Ovary (tissue), 10 donors: ENCODE measurements at regions of chr14 and their contacts with region 1.

Region 1: DNA sequence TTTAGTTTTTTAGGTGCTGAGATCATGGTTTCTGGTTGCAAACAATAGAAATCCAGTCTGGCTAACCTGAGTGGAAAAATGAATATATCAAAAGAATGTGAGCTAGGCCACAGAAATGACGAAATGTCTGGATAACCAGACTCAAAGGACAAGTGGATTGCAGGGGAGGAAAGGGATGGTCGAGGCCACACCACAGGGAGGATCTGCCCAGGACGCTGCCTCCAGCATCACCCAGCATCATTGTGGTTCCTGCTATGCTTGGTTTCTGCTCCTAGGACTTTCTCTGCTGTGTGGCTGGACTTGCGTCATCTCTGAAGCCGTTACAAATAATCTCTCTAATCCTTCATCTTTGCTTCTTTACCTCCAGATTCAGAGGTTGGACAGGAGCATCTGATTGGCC is 80.4 kb downstream of the TTC8 start:
- DNase-seq: no peak
- H3K4me3 ChIP-seq: no peak overlapping the region
- H3K27ac ChIP-seq: no peak overlapping the region
- H3K4me1 ChIP-seq: no peaks in the 10 kb centered on the region
- H3K27me3 ChIP-seq: no peaks in the 10 kb centered on the region
- CTCF ChIP-seq: no peak
- EP300 ChIP-seq: no peak
- POLR2A ChIP-seq: no peak

Region 2: GRCh38 chr14:88856786-88857366 is 48.0 kb before region 1 on chr14:
- intact Hi-C with region 1: no loop called
- DNase-seq: no peak
- H3K4me3 ChIP-seq: no peak overlapping the region
- H3K27ac ChIP-seq: peak overlapping the region in 1 of 2 donors; percentile 61
- H3K4me1 ChIP-seq: peaks cover 3% of the 10 kb centered on the region
- H3K27me3 ChIP-seq: no peaks in the 10 kb centered on the region
- CTCF ChIP-seq: no peak
- EP300 ChIP-seq: no peak
- POLR2A ChIP-seq: no peak

Region 3: DNA sequence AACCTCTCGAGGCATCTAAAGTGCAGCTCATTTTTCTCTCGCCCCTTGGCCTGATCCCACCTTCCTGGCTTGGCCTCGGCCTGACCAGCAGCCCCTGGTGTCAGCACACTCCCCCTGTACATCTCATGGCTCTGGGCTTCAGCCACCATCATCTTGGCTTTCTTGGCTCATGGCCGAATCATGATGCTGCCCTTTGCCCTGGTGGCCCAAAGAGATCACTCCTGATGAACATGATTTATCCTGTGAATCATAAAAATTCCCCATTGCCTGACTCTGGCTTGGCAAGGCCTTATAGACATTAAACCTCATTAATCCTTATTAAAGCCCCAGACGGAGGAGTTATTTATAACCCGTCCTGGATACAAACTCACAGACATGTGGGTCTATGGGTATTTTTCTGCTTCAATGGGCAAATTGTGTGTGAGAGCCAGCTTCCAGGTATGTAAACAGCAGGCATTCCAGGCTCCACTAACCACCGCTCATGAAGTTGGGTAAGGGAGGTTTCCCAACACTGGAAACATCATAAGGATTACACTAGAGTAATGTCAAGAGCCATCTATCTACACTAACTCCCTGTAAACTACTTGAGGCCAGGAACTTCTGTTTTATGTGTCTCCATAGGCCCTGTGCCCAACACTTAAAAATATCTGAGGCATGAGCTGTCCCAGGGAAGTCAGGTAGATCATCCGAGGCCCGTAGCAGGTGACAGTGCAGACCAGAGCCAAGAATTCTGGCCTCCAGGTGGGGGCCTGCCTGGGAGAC is 90.8 kb after region 1 on chr14:
- intact Hi-C with region 1: no loop called
- DNase-seq: no peak
- H3K4me3 ChIP-seq: no peak overlapping the region
- H3K27ac ChIP-seq: no peak overlapping the region
- H3K4me1 ChIP-seq: no peaks in the 10 kb centered on the region
- H3K27me3 ChIP-seq: no peaks in the 10 kb centered on the region
- CTCF ChIP-seq: no peak
- EP300 ChIP-seq: no peak
- POLR2A ChIP-seq: no peak

Region 4: DNA sequence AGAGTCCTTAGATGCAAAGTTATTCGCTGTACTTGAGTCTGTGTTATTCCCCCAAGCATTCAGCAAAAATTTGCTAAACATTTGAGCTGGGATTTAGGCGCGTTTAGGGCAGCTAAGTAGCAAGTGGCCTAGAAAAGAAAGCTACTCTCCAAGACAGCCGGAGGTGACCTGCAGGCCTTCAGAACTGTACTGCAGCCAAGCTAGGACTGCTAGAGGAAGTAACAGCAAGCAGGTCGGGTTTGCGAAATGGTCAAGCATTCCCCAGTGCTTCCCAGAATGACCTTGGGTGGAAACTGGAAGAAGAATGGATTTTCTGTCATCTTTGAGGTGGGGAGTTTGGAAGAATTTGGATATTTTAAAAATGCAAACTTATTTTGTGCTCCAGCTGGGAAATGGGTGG is 224.7 kb after region 1 on chr14:
- intact Hi-C with region 1: no loop called
- DNase-seq: peak in 4 of 5 donors; percentile 30 to 55 (median 46)
- H3K4me3 ChIP-seq: no peak overlapping the region
- H3K27ac ChIP-seq: no peak overlapping the region
- H3K4me1 ChIP-seq: no peaks in the 10 kb centered on the region
- H3K27me3 ChIP-seq: no peaks in the 10 kb centered on the region
- CTCF ChIP-seq: no peak
- EP300 ChIP-seq: no peak
- POLR2A ChIP-seq: no peak

Region 5: DNA sequence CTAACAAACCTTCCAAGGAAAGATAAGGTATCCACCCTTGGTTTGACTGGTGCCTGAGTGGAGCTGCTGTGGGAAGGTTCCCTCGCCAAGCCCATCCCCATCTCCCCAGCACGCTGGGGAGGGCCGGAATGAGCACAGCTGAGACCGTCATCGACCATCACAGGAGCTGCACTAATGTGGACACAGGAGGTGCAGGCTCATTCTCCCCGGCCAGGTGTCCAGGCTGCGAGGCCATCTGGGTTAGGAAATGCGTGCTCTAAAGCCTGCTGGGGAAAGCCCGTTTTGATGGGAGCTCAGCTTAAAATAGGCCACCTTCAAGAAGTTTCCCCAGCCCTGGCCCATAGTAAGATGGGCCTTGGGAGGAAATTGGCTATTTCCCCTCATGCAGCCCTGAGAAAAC is 547.4 kb after region 1 on chr14:
- intact Hi-C with region 1: loop called in 1 of 4 experiments (anchors 5 kb)
- DNase-seq: peak in 1 of 5 donors; percentile 7
- H3K4me3 ChIP-seq: no peak overlapping the region
- H3K27ac ChIP-seq: no peak overlapping the region
- H3K4me1 ChIP-seq: no peaks in the 10 kb centered on the region
- H3K27me3 ChIP-seq: no peaks in the 10 kb centered on the region
- CTCF ChIP-seq: no peak
- EP300 ChIP-seq: no peak
- POLR2A ChIP-seq: no peak

Region 6: DNA sequence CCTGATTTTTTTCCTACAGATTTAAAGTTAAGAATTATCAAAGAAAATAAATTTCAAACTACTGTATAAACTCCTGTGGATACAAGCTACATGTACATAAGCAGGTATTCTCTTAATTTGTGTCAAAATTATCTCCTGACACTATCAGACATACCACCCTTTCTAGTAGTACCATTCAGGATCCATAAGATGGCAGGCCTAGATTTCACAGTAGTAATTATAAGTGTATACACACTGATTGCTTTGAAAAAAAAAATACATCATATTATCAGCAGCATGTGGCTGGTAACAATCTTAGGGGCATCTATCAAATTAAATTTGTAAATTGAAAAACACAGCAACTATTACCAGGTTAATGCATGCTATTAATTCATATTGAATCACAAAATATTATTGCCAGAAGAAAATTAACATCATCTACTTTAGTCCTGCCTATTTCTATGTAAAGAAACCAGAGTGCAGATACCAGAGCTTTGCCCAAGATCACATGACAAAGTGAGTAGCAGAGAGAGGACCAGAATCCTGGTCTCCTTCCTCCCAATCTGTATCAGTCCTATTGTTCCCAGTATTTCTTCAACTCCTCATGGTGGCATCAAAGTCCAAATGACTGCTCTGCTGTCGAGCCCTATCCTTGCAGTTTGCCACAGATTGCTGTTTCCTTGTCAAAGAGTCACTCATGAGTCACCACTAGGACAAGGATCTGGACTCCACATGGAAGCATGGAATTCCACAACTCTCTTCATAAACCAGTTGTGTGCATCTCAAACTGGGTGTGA is 1464.3 kb after region 1 on chr14:
- intact Hi-C with region 1: no loop called
- DNase-seq: no peak
- H3K4me3 ChIP-seq: no peak overlapping the region
- H3K27ac ChIP-seq: no peak overlapping the region
- H3K4me1 ChIP-seq: no peaks in the 10 kb centered on the region
- H3K27me3 ChIP-seq: no peaks in the 10 kb centered on the region
- CTCF ChIP-seq: no peak
- EP300 ChIP-seq: no peak
- POLR2A ChIP-seq: no peak